ENCODE measurements at regions of chr9 and their contacts with region 1.

Region 1: DNA sequence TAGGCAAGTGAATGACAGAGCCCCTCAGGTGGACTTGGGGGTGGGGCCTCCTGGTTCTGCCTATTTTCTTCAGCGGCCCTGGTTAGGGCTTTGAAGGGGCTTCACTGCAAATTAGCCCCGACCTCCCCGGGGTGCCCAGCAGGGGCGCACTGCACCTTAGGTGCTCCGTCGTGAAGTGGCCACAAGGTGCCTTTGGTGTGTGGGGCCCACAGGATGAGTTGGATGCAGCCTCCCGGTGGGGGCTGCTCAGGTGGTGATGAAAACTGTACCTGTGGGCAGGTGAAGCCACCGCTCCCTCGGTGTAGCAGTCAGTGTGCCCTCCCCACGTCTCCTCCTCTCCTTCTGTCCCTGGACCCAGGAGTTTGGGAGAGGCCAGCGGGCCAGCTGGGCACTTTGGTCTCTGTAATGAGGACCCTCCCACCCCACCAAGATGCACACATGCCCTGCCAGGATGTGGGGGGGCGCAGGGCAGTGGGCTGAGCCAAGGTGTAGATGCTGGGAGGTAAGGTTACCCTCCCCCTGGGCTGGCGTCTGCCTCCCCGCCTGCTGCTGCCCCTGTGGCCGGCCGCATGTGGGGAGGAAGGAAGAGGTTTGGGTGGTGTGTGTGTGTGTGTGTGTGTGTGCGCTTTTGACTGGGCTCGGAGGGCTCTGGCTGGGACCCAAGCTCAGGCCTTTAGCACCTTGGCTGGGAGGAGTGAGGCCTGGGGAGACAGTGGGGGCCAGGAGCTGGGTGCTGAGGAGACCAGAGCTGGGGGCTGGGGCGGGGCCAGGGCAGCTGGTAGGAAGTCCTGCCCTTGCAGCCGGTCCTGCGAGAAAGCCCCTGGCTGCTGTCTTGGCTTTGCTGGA is 55.6 kb downstream of the RXRA start:
- DNase-seq: peak in 4 of 5 donors; percentile 66 to 84 (median 76)
- ATAC-seq: peak in 2 of 4 donors; percentile 1 to 30
- H3K4me3 ChIP-seq: peak overlapping the region in 1 of 12 donors; percentile 17
- H3K27ac ChIP-seq: peak overlapping the region in 5 of 12 donors; percentile 18 to 50 (median 43)
- H3K4me1 ChIP-seq: peaks cover 45 to 100% (median 99%) of the 10 kb centered on the region in 12 donors
- H3K27me3 ChIP-seq: no peaks in the 10 kb centered on the region
- CTCF ChIP-seq: peak in 5 of 12 donors; percentile 14 to 37 (median 20)
- POLR2A ChIP-seq: no peak

Region 2: GRCh38 chr9:134333234-134333873 is 48.5 kb before region 1 on chr9:
- intact Hi-C with region 1: loop called in 2 of 10 experiments (anchors 5 to 10 kb)
- DNase-seq: peak in 1 of 5 donors; percentile 45
- ATAC-seq: peak in 1 of 4 donors; percentile 13
- H3K4me3 ChIP-seq: peak overlapping the region in 3 of 12 donors; percentile 7 to 17 (median 15)
- H3K27ac ChIP-seq: peak overlapping the region in 8 of 12 donors; percentile 3 to 89 (median 48)
- H3K4me1 ChIP-seq: peaks cover 48 to 100% (median 98%) of the 10 kb centered on the region in 12 donors
- H3K27me3 ChIP-seq: no peaks in the 10 kb centered on the region
- CTCF ChIP-seq: no peak
- POLR2A ChIP-seq: no peak

Region 3: GRCh38 chr9:134344068-134344799 is 37.7 kb before region 1 on chr9:
- intact Hi-C with region 1: loop called in 3 of 10 experiments (anchors 5 to 10 kb)
- DNase-seq: peak; percentile 69 to 85 (median 75)
- ATAC-seq: peak in 3 of 4 donors; percentile 1 to 7 (median 2)
- H3K4me3 ChIP-seq: peak overlapping the region in 1 of 12 donors; percentile 6
- H3K27ac ChIP-seq: peak overlapping the region in 11 of 12 donors; percentile 16 to 94 (median 64)
- H3K4me1 ChIP-seq: peaks cover 36 to 100% (median 93%) of the 10 kb centered on the region in 12 donors
- H3K27me3 ChIP-seq: no peaks in the 10 kb centered on the region
- CTCF ChIP-seq: peak in 5 of 12 donors; percentile 10 to 27 (median 19)
- POLR2A ChIP-seq: no peak

Region 4: DNA sequence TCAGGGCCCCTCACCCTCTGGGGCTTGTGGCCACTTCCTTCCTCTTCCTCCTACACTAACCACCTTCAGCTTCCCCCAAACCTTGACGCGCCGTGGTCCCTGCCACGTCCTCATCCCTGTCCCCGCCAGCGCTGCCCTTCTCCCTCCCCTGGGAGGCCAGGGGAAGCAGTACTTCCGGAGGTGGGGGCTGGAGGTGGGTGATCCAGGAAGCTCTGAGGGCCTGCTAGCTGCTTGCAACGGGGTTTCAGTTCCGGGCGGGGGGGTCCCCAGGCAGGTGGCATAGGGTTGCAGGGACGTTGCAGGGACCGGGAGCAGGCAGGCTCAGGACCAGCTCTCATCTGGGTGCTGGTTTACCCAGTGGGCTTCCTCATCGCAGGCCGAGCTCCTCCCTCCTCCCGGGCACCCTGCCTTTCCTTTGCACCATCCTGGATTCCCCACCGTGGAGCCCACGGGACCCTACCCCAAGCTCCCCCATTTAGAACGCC is 14.4 kb after region 1 on chr9:
- intact Hi-C with region 1: loop called in 1 of 10 experiments (anchors 2 kb)
- DNase-seq: peak in 1 of 5 donors; percentile 53
- ATAC-seq: peak in 2 of 4 donors; percentile 24 to 27
- H3K4me3 ChIP-seq: peak overlapping the region in 1 of 12 donors; percentile 42
- H3K27ac ChIP-seq: peak overlapping the region in 11 of 12 donors; percentile 15 to 85 (median 34)
- H3K4me1 ChIP-seq: peaks cover 14 to 91% (median 62%) of the 10 kb centered on the region in 12 donors
- H3K27me3 ChIP-seq: no peaks in the 10 kb centered on the region
- CTCF ChIP-seq: no peak
- POLR2A ChIP-seq: no peak

Region 5: GRCh38 chr9:134434894-134435506 is 53.1 kb after region 1 on chr9:
- intact Hi-C with region 1: loop called in 4 of 10 experiments (anchors 2 to 10 kb)
- DNase-seq: peak; percentile 94 to 98 (median 96)
- ATAC-seq: peak; percentile 81 to 89 (median 83)
- H3K4me3 ChIP-seq: peak overlapping the region in 7 of 12 donors; percentile 0 to 29 (median 11)
- H3K27ac ChIP-seq: peak overlapping the region; percentile 70 to 91 (median 84)
- H3K4me1 ChIP-seq: peaks cover 4 to 88% (median 58%) of the 10 kb centered on the region in 12 donors
- H3K27me3 ChIP-seq: no peaks in the 10 kb centered on the region
- CTCF ChIP-seq: no peak
- POLR2A ChIP-seq: no peak

Region 6: GRCh38 chr9:134648701-134649535 is 267.0 kb after region 1 on chr9:
- intact Hi-C with region 1: no loop called
- DNase-seq: peak in 2 of 5 donors; percentile 22 to 25
- ATAC-seq: peak in 2 of 4 donors; percentile 7 to 42
- H3K4me3 ChIP-seq: no peak overlapping the region
- H3K27ac ChIP-seq: peak overlapping the region in 1 of 12 donors; percentile 89
- H3K4me1 ChIP-seq: peaks cover 0 to 71% (median 15%) of the 10 kb centered on the region in 12 donors
- H3K27me3 ChIP-seq: no peaks in the 10 kb centered on the region
- CTCF ChIP-seq: no peak
- POLR2A ChIP-seq: no peak